Calu3 (cell line): ENCODE measurements at regions of chr1 and their contacts with region 1.

Region 1: GRCh38 chr1:192489748-192490147 is 85.8 kb upstream of the RGS1 start:
- DNase-seq: peak; percentile 64
- H3K4me3 Mint-ChIP-seq: no peak overlapping the region
- H3K27ac Mint-ChIP-seq: peak overlapping the region; percentile 82
- H3K4me1 Mint-ChIP-seq: peaks cover 20% of the 10 kb centered on the region
- H3K27me3 Mint-ChIP-seq: no peaks in the 10 kb centered on the region
- CTCF ChIP-seq: no peak

Region 2: GRCh38 chr1:192518700-192519099 is 29.0 kb after region 1 on chr1:
- CTCF ChIA-PET with region 1: no interaction called
- intact Hi-C with region 1: loop called (anchors 1 kb)
- DNase-seq: no peak
- H3K4me3 Mint-ChIP-seq: no peak overlapping the region
- H3K27ac Mint-ChIP-seq: no peak overlapping the region
- H3K4me1 Mint-ChIP-seq: no peaks in the 10 kb centered on the region
- H3K27me3 Mint-ChIP-seq: no peaks in the 10 kb centered on the region
- CTCF ChIP-seq: no peak

Region 3: GRCh38 chr1:192530254-192530653 is 40.5 kb after region 1 on chr1:
- CTCF ChIA-PET with region 1: no interaction called
- intact Hi-C with region 1: loop called (anchors 5 kb)
- DNase-seq: no peak
- H3K4me3 Mint-ChIP-seq: no peak overlapping the region
- H3K27ac Mint-ChIP-seq: no peak overlapping the region
- H3K4me1 Mint-ChIP-seq: peaks cover 19% of the 10 kb centered on the region
- H3K27me3 Mint-ChIP-seq: no peaks in the 10 kb centered on the region
- CTCF ChIP-seq: no peak

Region 4: DNA sequence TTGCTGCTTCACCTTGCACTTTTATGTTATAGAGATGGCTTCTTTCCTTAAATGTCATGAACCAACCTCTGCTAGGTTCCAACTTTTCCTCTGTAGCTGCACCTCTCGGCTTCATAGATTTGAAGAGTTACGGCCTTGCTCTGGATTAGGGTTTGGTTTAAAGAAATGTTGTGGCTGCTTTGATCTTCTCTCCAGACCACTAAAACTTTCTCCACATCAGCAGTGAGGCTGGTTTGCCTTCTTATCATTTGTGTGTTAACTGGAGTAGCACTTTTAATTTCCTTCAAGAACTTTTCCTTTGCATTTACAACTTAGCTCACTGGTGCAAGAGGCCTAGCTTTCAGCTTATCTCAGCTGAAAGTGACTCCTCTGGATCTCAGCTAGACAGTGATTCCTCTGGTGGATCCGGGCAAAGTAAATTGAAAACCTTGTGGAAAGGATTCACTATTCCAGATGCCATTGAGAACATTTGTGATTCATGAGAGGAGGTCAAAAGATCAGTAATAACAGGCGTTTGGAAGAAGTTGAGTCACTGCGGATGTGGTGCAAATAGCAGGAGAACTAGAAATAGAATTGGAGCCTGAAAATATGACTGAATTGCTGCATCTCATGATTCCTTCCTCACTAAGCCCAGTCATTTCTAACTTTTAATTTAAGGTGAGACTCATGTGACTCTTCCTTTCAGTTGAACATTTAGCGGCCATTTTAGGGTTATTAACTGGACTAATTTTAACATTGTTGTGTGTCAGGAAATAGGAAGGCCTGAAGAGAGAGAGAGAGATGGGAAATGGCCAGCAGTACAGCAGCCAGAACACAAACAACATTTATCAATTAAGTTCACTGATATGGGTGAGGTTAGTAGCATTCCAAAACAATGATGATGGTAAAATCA is 69.6 kb after region 1 on chr1:
- CTCF ChIA-PET with region 1: no interaction called
- intact Hi-C with region 1: no loop called
- DNase-seq: no peak
- H3K4me3 Mint-ChIP-seq: no peak overlapping the region
- H3K27ac Mint-ChIP-seq: no peak overlapping the region
- H3K4me1 Mint-ChIP-seq: peaks cover 8% of the 10 kb centered on the region
- H3K27me3 Mint-ChIP-seq: no peaks in the 10 kb centered on the region
- CTCF ChIP-seq: no peak